ENCODE measurements at regions of chr2 and their contacts with region 1.

Region 1: GRCh38 chr2:112275306-112275886 is at the start of gene ZC3H6:
- DNase-seq: peak; percentile 98 to 100 (median 100)
- ATAC-seq: peak; percentile 90
- H3K4me3 ChIP-seq: peak within 1 kb of the TSS; percentile 74 to 100
- H3K4me3 Mint-ChIP-seq: peak within 1 kb of the TSS; percentile 95
- H3K27ac ChIP-seq: peak within 1 kb of the TSS; percentile 96 to 100
- H3K27ac Mint-ChIP-seq: peak within 1 kb of the TSS; percentile 100
- H3K4me1 ChIP-seq: peaks cover 19% of the 10 kb centered on the region
- H3K4me1 Mint-ChIP-seq: peaks cover 26% of the 10 kb centered on the region
- H3K27me3 ChIP-seq: no peaks in the 10 kb centered on the region
- H3K27me3 Mint-ChIP-seq: no peaks in the 10 kb centered on the region
- CTCF ChIP-seq: peak; percentile 16
- total RNA-seq, gene ZC3H6: 13.7 to 15.1 TPM

Region 2: DNA sequence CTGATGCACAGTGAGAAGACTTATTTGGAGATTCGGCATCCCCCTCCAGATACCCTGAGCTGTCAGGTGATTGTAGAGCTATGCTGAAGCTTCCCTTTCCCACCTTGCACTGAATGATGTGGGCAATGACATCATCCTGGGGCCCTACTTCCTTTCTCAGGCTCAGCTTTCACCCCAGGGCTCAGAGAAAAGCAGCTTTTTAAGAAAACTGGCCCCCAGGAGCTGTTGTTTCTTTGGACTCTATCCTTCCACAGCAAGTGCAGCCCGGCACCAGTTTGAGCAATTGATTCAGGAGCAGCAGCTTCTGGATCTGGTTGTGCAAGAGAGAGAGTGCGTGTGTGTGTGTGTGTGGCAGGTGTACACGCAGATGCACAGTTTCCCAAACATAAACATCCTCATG is 642.7 kb before region 1 on chr2:
- CTCF ChIA-PET with region 1: no interaction called
- POLR2A ChIA-PET with region 1: no interaction called
- intact Hi-C with region 1: no loop called
- DNase-seq: peak in 3 of 9 experiments; percentile 21 to 65 (median 40)
- ATAC-seq: peak; percentile 56
- H3K4me3 ChIP-seq: no peak overlapping the region
- H3K4me3 Mint-ChIP-seq: no peak overlapping the region
- H3K27ac ChIP-seq: no peak overlapping the region
- H3K27ac Mint-ChIP-seq: peak overlapping the region; percentile 42
- H3K4me1 ChIP-seq: peaks cover 9% of the 10 kb centered on the region
- H3K4me1 Mint-ChIP-seq: peaks cover 11% of the 10 kb centered on the region
- H3K27me3 ChIP-seq: peaks cover 0 to 3% of the 10 kb centered on the region in 2 experiments
- H3K27me3 Mint-ChIP-seq: peaks cover 2% of the 10 kb centered on the region
- CTCF ChIP-seq: no peak

Region 3: GRCh38 chr2:111883661-111884591 is 391.5 kb before region 1 on chr2 and contains the start of gene ANAPC1:
- CTCF ChIA-PET with region 1: no interaction called
- POLR2A ChIA-PET with region 1: no interaction called
- intact Hi-C with region 1: loop called in 1 of 2 experiments (anchors 5 kb)
- DNase-seq: peak; percentile 69 to 91 (median 86)
- ATAC-seq: peak; percentile 96
- H3K4me3 ChIP-seq: peak within 1 kb of the TSS; percentile 75 to 82
- H3K4me3 Mint-ChIP-seq: peak within 1 kb of the TSS; percentile 96
- H3K27ac ChIP-seq: peak within 1 kb of the TSS; percentile 76 to 81
- H3K27ac Mint-ChIP-seq: peak within 1 kb of the TSS; percentile 98
- H3K4me1 ChIP-seq: peaks cover 8% of the 10 kb centered on the region
- H3K4me1 Mint-ChIP-seq: peaks cover 14% of the 10 kb centered on the region
- H3K27me3 ChIP-seq: no peaks in the 10 kb centered on the region
- H3K27me3 Mint-ChIP-seq: no peaks in the 10 kb centered on the region
- CTCF ChIP-seq: no peak
- total RNA-seq, gene ANAPC1: 39.6 to 43.9 TPM

Region 4: DNA sequence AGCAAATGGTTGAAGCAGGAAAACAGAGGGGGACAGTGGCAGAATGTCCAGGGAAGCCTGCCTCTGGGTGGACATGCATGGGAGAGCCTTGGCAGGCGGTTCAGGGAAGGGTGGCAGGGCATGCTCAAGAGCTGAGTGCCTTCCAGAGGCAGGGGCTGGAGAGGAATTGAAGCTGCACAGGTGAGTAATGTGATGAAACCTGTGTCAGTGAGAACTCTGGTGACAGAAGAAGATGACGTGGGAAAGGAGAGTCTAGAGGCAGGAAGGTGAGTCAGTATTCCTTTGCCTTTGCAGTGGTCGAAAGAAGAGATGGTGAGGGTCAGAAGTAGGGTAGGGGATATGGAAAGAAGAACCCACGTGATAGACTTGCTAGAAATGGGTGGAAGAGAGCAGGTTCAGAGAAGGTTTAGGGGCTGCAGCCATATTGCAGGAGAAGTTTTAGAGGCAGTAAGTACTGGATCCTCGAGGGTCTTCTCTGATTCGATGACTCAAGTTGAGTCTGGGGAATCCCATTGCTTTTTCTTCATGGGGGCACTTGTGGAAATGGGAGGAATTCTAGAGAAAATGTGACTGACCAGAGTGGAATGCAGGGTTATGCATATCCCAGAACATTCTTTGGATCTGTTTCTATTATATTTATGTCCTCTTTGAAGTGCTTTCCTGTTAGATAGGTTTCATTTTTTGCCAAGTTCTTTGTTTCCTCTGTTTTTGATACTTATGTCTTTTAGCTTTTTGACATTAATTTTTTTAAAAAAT is 182.9 kb before region 1 on chr2:
- CTCF ChIA-PET with region 1: no interaction called
- POLR2A ChIA-PET with region 1: no interaction called
- intact Hi-C with region 1: no loop called
- DNase-seq: no peak
- ATAC-seq: no peak
- H3K4me3 ChIP-seq: no peak overlapping the region
- H3K4me3 Mint-ChIP-seq: no peak overlapping the region
- H3K27ac ChIP-seq: no peak overlapping the region
- H3K27ac Mint-ChIP-seq: peak overlapping the region; percentile 10
- H3K4me1 ChIP-seq: no peaks in the 10 kb centered on the region
- H3K4me1 Mint-ChIP-seq: peaks cover 6% of the 10 kb centered on the region
- H3K27me3 ChIP-seq: no peaks in the 10 kb centered on the region
- H3K27me3 Mint-ChIP-seq: no peaks in the 10 kb centered on the region
- CTCF ChIP-seq: no peak

Region 5: GRCh38 chr2:112187805-112188596 is 87.4 kb before region 1 on chr2:
- CTCF ChIA-PET with region 1: no interaction called
- POLR2A ChIA-PET with region 1: interaction called, 4 read pairs
- intact Hi-C with region 1: loop called in 1 of 2 experiments (anchors 1 kb)
- DNase-seq: peak; percentile 30 to 85 (median 77)
- ATAC-seq: peak; percentile 82
- H3K4me3 ChIP-seq: peak overlapping the region; percentile 16 to 23
- H3K4me3 Mint-ChIP-seq: peak overlapping the region; percentile 59
- H3K27ac ChIP-seq: peak overlapping the region; percentile 72 to 94
- H3K27ac Mint-ChIP-seq: peak overlapping the region; percentile 100
- H3K4me1 ChIP-seq: peaks cover 31% of the 10 kb centered on the region
- H3K4me1 Mint-ChIP-seq: peaks cover 63% of the 10 kb centered on the region
- H3K27me3 ChIP-seq: no peaks in the 10 kb centered on the region
- H3K27me3 Mint-ChIP-seq: no peaks in the 10 kb centered on the region
- CTCF ChIP-seq: no peak

Region 6: DNA sequence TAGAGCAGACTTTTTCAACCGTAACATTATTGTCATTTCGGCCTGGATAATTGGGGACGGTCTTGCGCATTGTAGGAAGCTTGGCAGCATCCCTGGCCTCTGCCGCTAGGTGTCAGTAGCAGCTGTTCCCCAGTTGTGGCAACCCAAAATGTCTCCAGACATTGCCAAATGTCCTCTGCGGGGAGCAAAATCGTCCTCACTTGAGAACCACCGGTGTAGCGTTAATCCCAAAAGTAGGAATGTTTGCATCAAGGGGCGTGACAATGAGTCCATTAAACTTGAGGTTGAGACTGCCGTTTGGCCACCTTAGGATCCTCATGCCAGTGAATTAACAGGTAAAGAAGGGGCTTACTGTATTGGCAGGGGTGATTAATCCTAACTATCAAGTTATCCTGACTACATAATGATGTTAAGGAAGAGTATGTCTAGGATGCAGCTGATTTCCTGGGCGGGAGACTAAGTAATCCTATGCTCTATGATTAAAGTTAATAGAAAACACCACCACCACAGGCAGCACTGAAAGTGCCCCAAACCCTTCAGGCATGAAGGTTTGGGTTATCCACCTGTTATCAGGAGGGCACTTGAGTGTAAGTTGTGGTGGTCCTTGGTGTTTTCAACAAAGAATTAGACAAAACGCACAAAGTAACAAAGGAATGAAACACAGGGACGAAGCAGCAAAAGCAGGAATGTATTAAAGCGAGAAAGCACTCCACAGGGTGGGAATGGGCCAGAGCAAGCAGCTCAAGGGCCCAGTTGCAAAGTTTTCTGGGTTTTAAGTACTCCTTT is 15.7 kb before region 1 on chr2:
- CTCF ChIA-PET with region 1: interaction called, 14 read pairs
- POLR2A ChIA-PET with region 1: interaction called, 17 read pairs
- intact Hi-C with region 1: loop called (anchors 1 kb)
- DNase-seq: peak; percentile 72 to 90 (median 87)
- ATAC-seq: peak; percentile 54
- H3K4me3 ChIP-seq: peak overlapping the region in 1 of 2 experiments; percentile 18
- H3K4me3 Mint-ChIP-seq: peak overlapping the region; percentile 76
- H3K27ac ChIP-seq: no peak overlapping the region
- H3K27ac Mint-ChIP-seq: peak overlapping the region; percentile 75
- H3K4me1 ChIP-seq: peaks cover 6% of the 10 kb centered on the region
- H3K4me1 Mint-ChIP-seq: peaks cover 9% of the 10 kb centered on the region
- H3K27me3 ChIP-seq: no peaks in the 10 kb centered on the region
- H3K27me3 Mint-ChIP-seq: peaks cover 3% of the 10 kb centered on the region
- CTCF ChIP-seq: peak; percentile 96

Region 7: DNA sequence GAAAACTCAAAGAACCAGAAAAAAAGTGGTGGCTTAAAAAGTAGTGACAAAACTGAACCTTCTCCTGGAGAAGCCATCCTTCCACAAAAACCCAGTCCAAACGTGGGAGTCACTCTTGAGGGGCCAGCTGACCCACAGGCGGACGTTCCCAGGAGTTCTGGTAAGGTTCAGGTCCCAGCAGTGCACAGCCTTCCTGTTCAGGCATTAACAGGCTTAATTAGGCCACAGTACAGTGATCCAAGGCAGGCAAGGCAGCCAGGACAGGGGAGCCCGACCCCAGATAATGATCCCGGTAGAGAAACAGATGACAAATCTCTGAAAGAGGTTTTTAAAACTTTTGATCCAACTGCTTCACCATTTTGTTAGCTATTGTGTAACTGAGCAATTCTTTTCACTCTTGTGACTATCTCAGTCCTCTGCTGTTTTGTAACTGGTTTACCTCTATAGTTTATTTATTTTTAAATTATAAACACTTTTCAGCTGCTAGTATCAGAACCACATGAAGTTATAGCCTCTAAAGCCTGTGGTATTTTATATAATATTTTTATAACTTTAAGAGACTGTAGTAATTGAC is 56.8 kb after region 1 on chr2:
- CTCF ChIA-PET with region 1: no interaction called
- POLR2A ChIA-PET with region 1: no interaction called
- intact Hi-C with region 1: no loop called
- DNase-seq: no peak
- ATAC-seq: no peak
- H3K4me3 ChIP-seq: no peak overlapping the region
- H3K4me3 Mint-ChIP-seq: no peak overlapping the region
- H3K27ac ChIP-seq: no peak overlapping the region
- H3K27ac Mint-ChIP-seq: no peak overlapping the region
- H3K4me1 ChIP-seq: no peaks in the 10 kb centered on the region
- H3K4me1 Mint-ChIP-seq: no peaks in the 10 kb centered on the region
- H3K27me3 ChIP-seq: no peaks in the 10 kb centered on the region
- H3K27me3 Mint-ChIP-seq: no peaks in the 10 kb centered on the region
- CTCF ChIP-seq: no peak

Region 8: DNA sequence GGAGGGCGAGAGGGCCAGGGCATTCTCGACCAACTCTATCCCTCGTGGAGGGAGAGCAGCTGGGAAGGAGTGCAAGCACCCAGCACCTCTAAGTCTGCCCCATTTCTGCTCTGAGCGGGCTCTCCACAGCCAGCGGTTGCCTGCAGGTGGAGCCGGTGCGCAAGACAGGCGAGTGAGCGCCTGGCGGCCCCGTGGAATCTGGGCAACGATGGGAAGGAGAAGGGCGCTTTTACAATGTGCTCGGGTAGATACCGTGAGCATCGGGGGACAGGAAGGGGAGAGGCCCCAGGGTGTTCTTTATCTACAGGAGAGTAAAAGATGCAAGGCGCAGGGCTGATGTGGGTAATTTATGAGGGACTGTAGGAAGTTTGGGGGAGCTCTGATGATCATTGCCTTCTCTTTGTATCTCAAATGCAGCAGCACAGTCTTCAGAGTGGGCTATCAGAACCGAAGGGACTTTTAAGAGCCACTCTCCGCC is 205.7 kb after region 1 on chr2:
- CTCF ChIA-PET with region 1: no interaction called
- POLR2A ChIA-PET with region 1: no interaction called
- intact Hi-C with region 1: loop called (anchors 5 kb)
- DNase-seq: peak; percentile 63 to 90 (median 84)
- ATAC-seq: peak; percentile 78
- H3K4me3 ChIP-seq: peak overlapping the region; percentile 56 to 87
- H3K4me3 Mint-ChIP-seq: peak overlapping the region; percentile 95
- H3K27ac ChIP-seq: peak overlapping the region; percentile 30 to 53
- H3K27ac Mint-ChIP-seq: peak overlapping the region; percentile 93
- H3K4me1 ChIP-seq: peaks cover 16% of the 10 kb centered on the region
- H3K4me1 Mint-ChIP-seq: peaks cover 21% of the 10 kb centered on the region
- H3K27me3 ChIP-seq: no peaks in the 10 kb centered on the region
- H3K27me3 Mint-ChIP-seq: no peaks in the 10 kb centered on the region
- CTCF ChIP-seq: peak; percentile 76

Region 9: GRCh38 chr2:112529757-112530156 is 254.4 kb after region 1 on chr2:
- CTCF ChIA-PET with region 1: no interaction called
- POLR2A ChIA-PET with region 1: no interaction called
- intact Hi-C with region 1: no loop called
- DNase-seq: no peak
- ATAC-seq: no peak
- H3K4me3 ChIP-seq: no peak overlapping the region
- H3K4me3 Mint-ChIP-seq: no peak overlapping the region
- H3K27ac ChIP-seq: no peak overlapping the region
- H3K27ac Mint-ChIP-seq: no peak overlapping the region
- H3K4me1 ChIP-seq: no peaks in the 10 kb centered on the region
- H3K4me1 Mint-ChIP-seq: no peaks in the 10 kb centered on the region
- H3K27me3 ChIP-seq: no peaks in the 10 kb centered on the region
- H3K27me3 Mint-ChIP-seq: no peaks in the 10 kb centered on the region
- CTCF ChIP-seq: no peak

Region 10: GRCh38 chr2:112645310-112646101 is 370.1 kb after region 1 on chr2 and contains the start of gene SLC20A1:
- CTCF ChIA-PET with region 1: no interaction called
- POLR2A ChIA-PET with region 1: no interaction called
- intact Hi-C with region 1: loop called (anchors 5 kb)
- DNase-seq: peak; percentile 96 to 100 (median 98)
- ATAC-seq: peak; percentile 91
- H3K4me3 ChIP-seq: peak within 1 kb of the TSS; percentile 84 to 90
- H3K4me3 Mint-ChIP-seq: peak within 1 kb of the TSS; percentile 85
- H3K27ac ChIP-seq: peak within 1 kb of the TSS; percentile 91
- H3K27ac Mint-ChIP-seq: peak within 1 kb of the TSS; percentile 89
- H3K4me1 ChIP-seq: peaks cover 50% of the 10 kb centered on the region
- H3K4me1 Mint-ChIP-seq: peaks cover 56% of the 10 kb centered on the region
- H3K27me3 ChIP-seq: no peaks in the 10 kb centered on the region
- H3K27me3 Mint-ChIP-seq: no peaks in the 10 kb centered on the region
- CTCF ChIP-seq: peak; percentile 55
- total RNA-seq, gene SLC20A1: 144 to 145 TPM